HCT116 (cell line): ENCODE measurements at regions of chr22 and their contacts with region 1.

Region 1: GRCh38 chr22:19629720-19630419 is 84.4 kb upstream of the SEPTIN5 start:
- DNase-seq: peak; percentile 68
- ATAC-seq: peak; percentile 93
- H3K4me3 ChIP-seq: no peak overlapping the region
- H3K27ac ChIP-seq: no peak overlapping the region
- H3K4me1 ChIP-seq: peaks cover 4 to 6% of the 10 kb centered on the region in 2 experiments; a peak in 2 of 4 replicates
- H3K27me3 ChIP-seq: no peaks in the 10 kb centered on the region
- CTCF ChIP-seq: peak; percentile 83 to 97 (median 95)
- POLR2A ChIP-seq: no peak
- RAD21 ChIP-seq: peak; percentile 92

Region 2: DNA sequence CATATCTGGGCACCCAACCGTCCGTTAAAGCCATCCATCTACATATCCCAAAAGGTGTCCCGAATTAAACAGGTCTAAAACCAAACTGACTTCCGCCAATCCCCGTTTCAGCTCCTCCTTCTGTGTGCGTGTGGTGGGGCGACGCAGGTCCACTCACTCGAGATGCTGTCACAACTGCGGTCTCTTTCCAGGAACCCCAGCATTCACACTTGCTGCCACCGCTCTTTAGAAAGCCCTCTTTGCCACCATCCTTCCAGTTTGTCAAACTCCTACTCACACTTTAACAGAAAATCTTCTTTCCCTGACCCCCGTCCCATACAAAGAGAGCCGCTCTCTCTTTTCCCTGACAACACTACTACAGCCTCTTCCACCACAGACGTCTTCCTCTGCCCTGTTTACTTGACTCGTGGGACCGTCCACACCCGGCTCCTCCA is 485.9 kb before region 1 on chr22:
- CTCF ChIA-PET with region 1: interaction called, 26 read pairs
- POLR2A ChIA-PET with region 1: interaction called, 3 read pairs
- RAD21 ChIA-PET with region 1: interaction called in 1 of 2 experiments, 5 read pairs
- intact Hi-C with region 1: loop called (anchors 1 kb)
- DNase-seq: no peak
- ATAC-seq: peak; percentile 48
- H3K4me3 ChIP-seq: peak overlapping the region; percentile 90 to 97
- H3K27ac ChIP-seq: peak overlapping the region; percentile 48
- H3K4me1 ChIP-seq: peaks cover 3 to 11% of the 10 kb centered on the region in 2 experiments
- H3K27me3 ChIP-seq: no peaks in the 10 kb centered on the region
- CTCF ChIP-seq: no peak
- POLR2A ChIP-seq: no peak
- RAD21 ChIP-seq: no peak

Region 3: GRCh38 chr22:19178656-19179496 is 451.0 kb before region 1 on chr22 and contains the start of gene SLC25A1:
- CTCF ChIA-PET with region 1: interaction called, 18 read pairs
- POLR2A ChIA-PET with region 1: no interaction called
- RAD21 ChIA-PET with region 1: interaction called, 6 to 7 read pairs
- intact Hi-C with region 1: loop called (anchors 1 kb)
- DNase-seq: peak; percentile 63
- ATAC-seq: peak; percentile 82
- H3K4me3 ChIP-seq: peak within 1 kb of the TSS; percentile 67 to 82
- H3K27ac ChIP-seq: peak within 1 kb of the TSS; percentile 94
- H3K4me1 ChIP-seq: peaks cover 7 to 49% of the 10 kb centered on the region in 2 experiments
- H3K27me3 ChIP-seq: no peaks in the 10 kb centered on the region
- CTCF ChIP-seq: no peak
- POLR2A ChIP-seq: peak; percentile 32
- RAD21 ChIP-seq: no peak
- total RNA-seq, gene SLC25A1: 146 TPM

Region 4: DNA sequence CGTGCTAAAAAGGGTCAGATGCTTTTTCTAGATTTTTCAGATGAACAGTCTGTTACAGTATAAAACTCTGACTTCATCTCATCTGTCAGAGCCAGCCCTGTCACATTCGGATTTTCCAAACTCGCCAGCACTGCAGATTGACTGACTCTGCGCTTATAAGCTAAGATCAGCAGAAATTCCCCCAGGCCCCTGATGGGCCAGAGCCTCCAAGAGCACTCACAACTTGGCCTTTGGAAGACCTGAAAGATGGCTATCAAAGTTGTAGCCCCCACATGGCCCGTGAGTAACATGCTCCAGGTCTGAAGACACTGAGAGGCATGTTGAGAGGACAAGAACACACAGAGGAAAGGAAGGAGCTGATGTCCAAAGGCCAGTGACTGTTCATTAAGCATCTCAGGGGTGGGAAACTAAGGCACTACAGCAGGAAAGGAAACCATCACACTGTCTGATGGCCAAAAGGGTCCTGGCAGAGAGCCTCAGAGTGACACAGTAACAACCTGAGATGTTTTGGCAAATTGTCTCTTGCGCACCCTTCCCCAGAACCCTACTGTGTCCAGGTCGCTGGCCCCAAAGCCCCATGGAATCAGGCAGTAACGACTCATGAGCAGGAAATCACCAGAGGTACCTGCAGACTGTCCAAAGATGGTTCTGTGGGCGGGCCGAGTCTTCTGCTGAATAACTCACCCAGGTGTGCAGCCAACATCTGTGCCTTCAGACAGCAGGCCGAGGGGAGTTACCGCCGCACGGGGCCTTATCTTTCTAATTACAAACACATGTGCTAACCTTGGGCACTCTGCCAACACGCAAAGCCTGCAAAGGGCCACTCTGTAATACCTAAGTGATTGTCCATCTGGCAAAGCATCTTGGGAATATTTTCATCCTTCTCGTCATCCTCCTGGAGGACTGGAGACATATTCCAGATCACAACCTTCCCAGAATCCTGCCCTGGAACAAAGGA is 221.9 kb before region 1 on chr22:
- CTCF ChIA-PET with region 1: no interaction called
- POLR2A ChIA-PET with region 1: no interaction called
- RAD21 ChIA-PET with region 1: no interaction called
- intact Hi-C with region 1: no loop called
- DNase-seq: no peak
- ATAC-seq: no peak
- H3K4me3 ChIP-seq: no peak overlapping the region
- H3K27ac ChIP-seq: no peak overlapping the region
- H3K4me1 ChIP-seq: peaks cover 0 to 10% of the 10 kb centered on the region in 2 experiments; a peak in 2 of 4 replicates
- H3K27me3 ChIP-seq: no peaks in the 10 kb centered on the region
- CTCF ChIP-seq: no peak
- POLR2A ChIP-seq: no peak
- RAD21 ChIP-seq: no peak

Region 5: DNA sequence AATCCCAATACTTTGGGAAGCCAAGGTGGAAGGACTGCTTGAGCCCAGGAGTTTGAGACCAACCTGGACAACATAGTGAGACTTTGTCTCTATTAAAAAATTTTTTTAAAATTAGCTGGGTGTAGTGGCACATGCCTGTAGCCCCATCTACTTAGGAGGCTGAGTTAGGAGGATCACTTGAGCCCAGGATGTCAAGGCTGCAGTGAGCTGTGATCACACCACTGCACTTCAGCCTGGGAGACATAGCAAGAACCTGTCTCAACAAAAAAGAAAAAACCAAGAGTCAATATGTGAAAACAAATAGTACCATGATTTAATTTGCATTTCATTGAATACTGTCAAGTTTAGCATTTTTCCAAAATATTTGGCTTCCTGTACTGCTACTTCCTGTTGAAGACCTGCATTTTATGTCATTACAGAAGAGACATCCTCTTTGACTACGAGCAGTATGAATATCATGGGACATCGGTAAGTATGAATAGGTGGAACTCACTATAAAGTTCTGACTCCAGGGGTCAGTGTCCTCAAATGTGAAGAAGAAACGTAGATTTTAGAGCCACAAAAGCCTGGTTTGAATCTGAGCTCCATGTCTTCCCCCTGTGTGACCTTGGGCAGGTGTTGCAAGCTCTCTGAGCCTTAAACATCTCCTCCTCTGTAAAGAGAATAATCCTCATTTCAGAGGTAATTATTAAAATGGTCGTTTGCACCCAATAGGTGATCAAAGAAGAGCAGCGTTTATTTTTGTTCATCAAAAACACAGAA is 134.1 kb before region 1 on chr22:
- CTCF ChIA-PET with region 1: interaction called, 18 read pairs
- POLR2A ChIA-PET with region 1: no interaction called
- RAD21 ChIA-PET with region 1: interaction called in 1 of 2 experiments, 3 read pairs
- intact Hi-C with region 1: loop called (anchors 2 kb)
- DNase-seq: no peak
- ATAC-seq: 0 out of 2 replicates have a peak, but pooled peaks have one; percentile 47
- H3K4me3 ChIP-seq: no peak overlapping the region
- H3K27ac ChIP-seq: no peak overlapping the region
- H3K4me1 ChIP-seq: no peaks in the 10 kb centered on the region
- H3K27me3 ChIP-seq: no peaks in the 10 kb centered on the region
- CTCF ChIP-seq: no peak; a peak in 2 of 6 replicates
- POLR2A ChIP-seq: no peak
- RAD21 ChIP-seq: peak; percentile 27

Region 6: DNA sequence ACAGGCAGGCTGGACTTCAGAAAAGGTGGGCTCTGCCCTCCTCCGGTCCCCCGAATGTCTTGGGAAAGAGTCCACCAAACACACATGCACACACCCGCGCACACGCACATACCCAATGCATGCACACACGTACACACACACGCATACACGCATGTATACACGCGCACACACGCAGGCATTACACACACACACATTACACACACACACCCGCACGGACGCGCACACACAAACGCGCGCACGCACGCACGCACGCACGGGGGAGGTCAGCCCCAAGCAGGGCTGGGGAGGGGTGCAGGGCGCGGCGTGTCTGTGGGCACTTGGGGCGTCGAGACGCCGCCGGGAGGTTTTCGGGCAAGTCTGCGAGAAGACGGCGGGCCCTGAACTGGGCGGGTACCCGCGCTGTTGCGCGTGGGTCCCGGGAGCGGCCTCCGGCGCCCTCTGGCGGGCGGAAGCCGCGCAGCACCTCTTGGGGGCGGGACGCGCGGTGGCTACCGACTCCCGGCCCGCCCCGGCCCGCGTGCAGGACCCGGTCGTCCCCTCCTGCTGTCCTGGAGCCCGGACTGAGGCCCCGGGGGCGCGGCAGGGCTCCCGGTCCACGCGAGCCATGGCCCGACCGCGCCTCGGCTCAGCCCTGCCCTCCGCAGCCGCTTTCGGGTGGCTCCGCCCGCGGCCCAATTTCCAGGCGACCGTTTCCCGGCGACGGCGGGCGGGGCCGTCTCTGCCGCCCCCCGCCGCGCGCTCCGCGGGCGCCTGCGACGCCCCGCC is 88.0 kb after region 1 on chr22:
- CTCF ChIA-PET with region 1: no interaction called
- POLR2A ChIA-PET with region 1: interaction called, 3 read pairs
- RAD21 ChIA-PET with region 1: no interaction called
- intact Hi-C with region 1: loop called (anchors 1 kb)
- DNase-seq: no peak
- ATAC-seq: peak; percentile 89
- H3K4me3 ChIP-seq: peak overlapping the region; percentile 20 to 52
- H3K27ac ChIP-seq: peak overlapping the region; percentile 84; the same call in 1 of the 2 replicates
- H3K4me1 ChIP-seq: peaks cover 10 to 33% of the 10 kb centered on the region in 2 experiments
- H3K27me3 ChIP-seq: no peaks in the 10 kb centered on the region
- CTCF ChIP-seq: peak; percentile 55 to 73 (median 61); a peak in 5 of 6 replicates
- POLR2A ChIP-seq: no peak
- RAD21 ChIP-seq: peak; percentile 81